ENCODE measurements at regions of chr10 and their contacts with region 1.

Region 1: DNA sequence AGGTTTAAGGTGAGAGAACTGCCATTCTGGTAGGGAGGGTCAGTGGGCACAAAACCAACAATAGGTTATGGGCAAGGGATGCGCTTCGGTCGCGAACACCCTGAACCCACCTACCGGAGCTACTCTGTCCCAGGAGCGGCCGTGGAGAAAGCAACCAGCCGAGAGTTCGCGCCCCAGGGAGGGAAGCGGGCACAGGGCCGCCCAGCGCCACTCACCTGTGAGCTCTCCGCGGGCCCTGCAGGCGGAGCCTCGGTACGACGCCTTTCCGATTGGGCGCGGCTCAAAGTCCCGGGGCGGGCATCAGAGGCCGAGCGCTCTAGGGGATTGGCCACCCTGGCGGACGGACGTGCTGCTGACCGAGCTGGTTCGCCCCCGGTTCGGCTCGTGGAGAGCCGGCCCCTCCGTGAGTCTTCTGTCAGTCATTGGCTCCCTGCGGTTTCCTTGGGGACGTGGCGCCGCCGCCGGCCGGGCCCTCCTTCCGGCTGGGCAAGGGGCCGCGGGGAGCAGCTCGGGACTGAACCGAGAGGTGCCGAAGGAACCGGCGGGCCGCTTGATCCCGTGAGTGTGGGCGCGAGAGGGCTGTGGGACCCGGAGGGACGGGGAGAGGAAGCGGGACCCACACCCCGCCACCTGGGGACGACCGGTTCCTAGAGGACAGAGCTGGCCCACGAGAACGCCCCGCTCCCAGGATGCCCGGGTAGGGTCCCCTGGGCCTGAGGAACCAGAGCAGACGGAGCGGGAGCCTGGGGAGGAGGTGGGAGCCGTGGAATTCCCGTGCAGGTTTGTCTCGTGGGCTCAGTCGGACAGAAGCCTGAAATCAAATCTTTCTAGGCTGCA is at the start of gene ENTPD7:
- DNase-seq: peak; percentile 87
- H3K4me3 ChIP-seq: peak within 1 kb of the TSS; percentile 92
- H3K27ac ChIP-seq: peak within 1 kb of the TSS; percentile 66
- H3K27me3 ChIP-seq: no peaks in the 10 kb centered on the region
- CTCF ChIP-seq: peak; percentile 16; the same call in 1 of the 2 replicates
- polyA plus RNA-seq, gene ENTPD7: 14.4 and 16.2 TPM in 2 replicates

Region 2: GRCh38 chr10:99630439-99630838 is 28.8 kb before region 1 on chr10:
- CTCF ChIA-PET with region 1: interaction called, 15 read pairs
- POLR2A ChIA-PET with region 1: interaction called, 4 read pairs
- DNase-seq: peak; percentile 20
- H3K4me3 ChIP-seq: no peak overlapping the region
- H3K27ac ChIP-seq: no peak overlapping the region
- H3K27me3 ChIP-seq: peaks cover 3% of the 10 kb centered on the region
- CTCF ChIP-seq: peak; percentile 59